ENCODE measurements at regions of chr15 and their contacts with region 1.

Region 1: DNA sequence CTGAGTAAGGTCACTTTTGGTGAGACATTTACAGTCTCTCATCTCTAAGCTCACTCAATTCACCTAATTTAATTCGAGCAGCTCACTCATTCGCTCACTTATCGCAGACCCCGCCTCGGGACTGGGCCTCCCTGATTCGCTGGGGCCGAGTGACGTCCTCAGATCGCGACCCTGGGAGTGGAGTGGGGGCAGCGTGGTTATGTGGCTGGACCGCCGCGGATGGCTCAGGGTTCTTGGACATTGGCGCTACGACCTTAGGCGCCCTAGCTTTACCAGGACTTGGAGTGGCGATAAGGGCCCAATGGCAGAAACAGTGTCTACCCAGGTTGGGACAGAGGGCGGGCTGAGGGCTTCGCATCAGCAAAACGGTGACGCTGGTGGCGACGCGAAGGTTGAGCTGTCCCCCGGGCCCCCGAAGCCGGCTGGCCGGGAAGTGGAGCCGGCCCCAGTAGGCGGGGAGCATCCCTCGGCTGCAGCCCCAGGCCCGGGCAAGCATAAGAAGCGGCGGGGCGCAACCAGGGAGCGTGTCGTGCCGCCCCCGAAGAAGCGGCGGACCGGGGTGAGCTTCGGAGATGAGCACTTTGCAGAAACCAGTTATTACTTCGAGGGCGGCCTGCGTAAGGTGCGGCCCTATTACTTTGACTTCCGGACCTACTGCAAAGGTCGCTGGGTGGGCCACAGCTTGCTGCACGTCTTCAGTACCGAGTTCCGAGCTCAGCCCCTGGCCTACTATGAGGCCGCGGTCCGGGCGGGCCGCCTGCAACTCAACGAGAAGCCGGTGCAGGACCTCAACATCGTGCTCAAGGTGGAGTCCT is at the start of gene RPUSD2:
- DNase-seq: peak; percentile 83

Region 2: GRCh38 chr15:40412095-40412759 is 157.1 kb before region 1 on chr15:
- CTCF ChIA-PET with region 1: no interaction called
- POLR2A ChIA-PET with region 1: no interaction called
- DNase-seq: no peak

Region 3: DNA sequence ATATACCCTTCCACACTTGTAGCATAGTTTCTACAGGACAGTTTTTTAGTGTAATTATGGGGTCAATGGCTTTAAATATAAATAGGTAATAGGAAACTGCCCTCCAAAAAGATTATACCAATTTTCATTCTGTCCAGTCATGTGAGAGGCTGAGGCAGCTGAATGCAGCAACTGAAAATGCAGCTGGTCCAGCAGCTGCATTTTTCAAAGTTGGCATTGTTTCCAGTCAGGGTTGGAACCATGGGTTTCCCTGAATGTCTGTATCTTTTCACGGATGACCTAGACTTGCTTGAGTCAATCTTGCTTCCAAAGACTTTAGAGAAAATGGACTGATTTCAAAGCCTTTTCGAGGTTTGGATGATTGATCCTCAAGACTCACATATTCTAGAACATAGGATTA is 14.8 kb after region 1 on chr15:
- CTCF ChIA-PET with region 1: interaction called, 4 read pairs
- POLR2A ChIA-PET with region 1: interaction called, 17 read pairs
- DNase-seq: no peak

Region 4: GRCh38 chr15:40593588-40594428 is 24.5 kb after region 1 on chr15 and contains the start of gene KNL1:
- CTCF ChIA-PET with region 1: interaction called, 4 read pairs
- POLR2A ChIA-PET with region 1: interaction called, 17 read pairs
- DNase-seq: peak; percentile 69

Region 5: GRCh38 chr15:40873625-40874561 is 304.5 kb after region 1 on chr15 and contains the start of gene RHOV:
- CTCF ChIA-PET with region 1: no interaction called
- POLR2A ChIA-PET with region 1: no interaction called
- DNase-seq: peak; percentile 67